ENCODE measurements at regions of chr15 and their contacts with region 1.

Region 1: GRCh38 chr15:50765195-50765973 is at the start of gene SPPL2A:
- DNase-seq: peak; percentile 69 to 97 (median 75)

Region 2: GRCh38 chr15:50686468-50687301 is 78.7 kb before region 1 on chr15 and contains the start of gene TRPM7:
- intact Hi-C with region 1: loop called (anchors 2 kb)
- DNase-seq: peak; percentile 75 to 98 (median 82)

Region 3: GRCh38 chr15:50876989-50877360 is 111.6 kb after region 1 on chr15:
- intact Hi-C with region 1: loop called (anchors 10 kb)
- DNase-seq: peak in 8 of 10 donors; percentile 30 to 90 (median 71)